CD8-positive, alpha-beta T cell (primary cell): ENCODE measurements at regions of chr5 and their contacts with region 1.

Region 1: DNA sequence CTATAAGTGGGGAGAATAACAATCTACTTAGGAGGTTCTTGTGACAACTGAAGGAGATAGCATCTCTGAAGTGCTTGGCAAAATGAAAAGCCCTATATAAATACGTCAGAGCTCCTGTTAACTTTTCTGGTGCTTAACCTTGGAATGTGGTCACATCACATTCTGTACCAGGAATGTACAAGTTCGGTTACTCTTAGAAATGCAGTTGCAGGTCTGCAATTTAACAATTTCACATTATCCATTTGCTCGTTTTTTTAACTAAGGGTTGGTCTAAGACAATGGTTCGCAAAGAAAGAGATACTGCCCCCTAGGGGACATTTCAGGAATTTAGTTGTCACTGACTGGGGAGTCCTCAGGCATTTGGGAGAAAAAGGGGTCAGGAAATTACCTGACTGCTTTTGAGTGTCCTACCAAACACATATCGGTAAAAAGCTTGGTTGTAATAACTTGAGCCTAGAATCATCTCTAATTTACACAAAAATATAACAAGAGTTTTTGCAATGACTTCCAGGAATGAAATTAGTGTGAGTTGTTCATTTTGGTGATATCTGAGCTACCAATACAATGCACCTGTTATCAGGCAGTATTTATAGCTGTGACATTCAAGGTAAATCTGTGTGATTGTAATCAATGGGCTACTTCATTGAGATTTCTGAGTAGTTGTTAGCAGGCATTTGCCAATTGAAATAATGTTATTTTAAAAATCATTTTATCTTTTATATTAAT is 5.4 kb upstream of the HBEGF start:
- DNase-seq: peak in 8 of 9 experiments; percentile 19 to 83 (median 52)
- ATAC-seq: peak; percentile 84
- H3K4me3 ChIP-seq: no peak overlapping the region
- H3K4me3 Mint-ChIP-seq: no peak overlapping the region
- H3K27ac ChIP-seq: no peak overlapping the region
- H3K27ac Mint-ChIP-seq: no peak overlapping the region
- H3K4me1 ChIP-seq: no peaks in the 10 kb centered on the region
- H3K4me1 Mint-ChIP-seq: peaks cover 10% of the 10 kb centered on the region
- H3K27me3 ChIP-seq: peaks cover 0 to 11% of the 10 kb centered on the region in 2 experiments
- H3K27me3 Mint-ChIP-seq: peaks cover 27% of the 10 kb centered on the region
- CTCF ChIP-seq: peak; percentile 86

Region 2: DNA sequence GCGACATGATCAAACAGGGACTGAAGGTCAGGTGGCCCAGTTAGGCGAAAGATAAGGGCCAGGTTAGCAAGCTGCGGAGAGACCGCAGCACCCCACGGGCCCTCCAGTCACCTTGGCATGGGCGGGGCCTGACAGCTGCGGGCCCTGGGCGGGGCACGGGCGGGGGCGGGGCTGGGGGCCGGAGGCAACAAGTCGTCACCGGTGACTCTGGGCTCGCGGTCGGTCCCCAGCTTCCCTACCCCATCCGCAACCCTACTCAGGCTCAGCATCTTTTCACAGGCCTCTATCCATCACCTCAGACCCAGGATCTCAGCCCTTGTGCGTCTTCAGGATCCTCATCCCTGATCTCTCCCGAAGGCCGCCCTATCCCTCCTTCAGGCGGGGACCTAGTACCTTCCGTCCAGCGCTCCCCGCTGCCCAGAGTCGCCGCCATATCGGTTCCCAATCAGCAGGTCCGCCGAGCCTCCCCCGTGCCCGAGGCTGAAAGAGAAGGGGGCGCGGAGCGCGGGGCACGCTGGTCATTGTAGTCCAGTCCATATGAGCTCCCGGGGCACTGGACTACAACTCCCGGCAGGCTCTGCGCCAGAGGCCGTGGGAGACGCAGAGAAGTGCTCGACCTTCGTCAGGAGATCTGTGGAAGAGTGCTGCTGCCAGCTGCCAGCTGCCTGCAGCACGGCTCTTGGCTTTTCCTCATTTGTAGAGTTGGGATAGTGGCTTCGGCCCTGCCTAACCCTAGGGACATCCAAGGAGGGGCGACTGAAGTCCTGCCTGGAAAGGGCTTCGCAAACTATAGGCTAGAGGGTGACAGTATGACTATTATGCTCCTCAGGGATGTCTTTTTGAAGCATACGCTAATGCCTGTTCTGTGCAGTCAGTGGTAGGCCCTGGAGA is 912.5 kb before region 1 on chr5 and contains the start of gene DNAJC18:
- CTCF ChIA-PET with region 1: no interaction called
- POLR2A ChIA-PET with region 1: no interaction called
- intact Hi-C with region 1: no loop called
- DNase-seq: peak; percentile 78 to 93 (median 90)
- ATAC-seq: peak; percentile 88
- H3K4me3 ChIP-seq: peak within 1 kb of the TSS; percentile 95 to 98
- H3K4me3 Mint-ChIP-seq: peak within 1 kb of the TSS; percentile 98
- H3K27ac ChIP-seq: peak within 1 kb of the TSS; percentile 97 to 98
- H3K27ac Mint-ChIP-seq: peak within 1 kb of the TSS; percentile 99
- H3K4me1 ChIP-seq: peaks cover 24% of the 10 kb centered on the region
- H3K4me1 Mint-ChIP-seq: peaks cover 33% of the 10 kb centered on the region
- H3K27me3 ChIP-seq: no peaks in the 10 kb centered on the region
- H3K27me3 Mint-ChIP-seq: no peaks in the 10 kb centered on the region
- CTCF ChIP-seq: no peak
- total RNA-seq, gene DNAJC18: 8.0 to 10.2 TPM

Region 3: GRCh38 chr5:139856714-139857113 is 495.1 kb before region 1 on chr5:
- CTCF ChIA-PET with region 1: no interaction called
- POLR2A ChIA-PET with region 1: no interaction called
- intact Hi-C with region 1: no loop called
- DNase-seq: no peak
- ATAC-seq: no peak
- H3K4me3 ChIP-seq: no peak overlapping the region
- H3K4me3 Mint-ChIP-seq: no peak overlapping the region
- H3K27ac ChIP-seq: no peak overlapping the region
- H3K27ac Mint-ChIP-seq: no peak overlapping the region
- H3K4me1 ChIP-seq: no peaks in the 10 kb centered on the region
- H3K4me1 Mint-ChIP-seq: no peaks in the 10 kb centered on the region
- H3K27me3 ChIP-seq: no peaks in the 10 kb centered on the region
- H3K27me3 Mint-ChIP-seq: peaks cover 6% of the 10 kb centered on the region
- CTCF ChIP-seq: no peak

Region 4: GRCh38 chr5:140108084-140109017 is 243.4 kb before region 1 on chr5:
- CTCF ChIA-PET with region 1: no interaction called
- POLR2A ChIA-PET with region 1: no interaction called
- intact Hi-C with region 1: no loop called
- DNase-seq: peak in 4 of 9 experiments; percentile 15 to 39 (median 21)
- ATAC-seq: peak; percentile 2
- H3K4me3 ChIP-seq: peak overlapping the region; percentile 63 to 81
- H3K4me3 Mint-ChIP-seq: peak overlapping the region; percentile 96
- H3K27ac ChIP-seq: peak overlapping the region; percentile 96 to 98
- H3K27ac Mint-ChIP-seq: peak overlapping the region; percentile 98
- H3K4me1 ChIP-seq: peaks cover 54% of the 10 kb centered on the region
- H3K4me1 Mint-ChIP-seq: peaks cover 56% of the 10 kb centered on the region
- H3K27me3 ChIP-seq: no peaks in the 10 kb centered on the region
- H3K27me3 Mint-ChIP-seq: peaks cover 17% of the 10 kb centered on the region
- CTCF ChIP-seq: no peak

Region 5: GRCh38 chr5:140244525-140245025 is 107.2 kb before region 1 on chr5:
- CTCF ChIA-PET with region 1: interaction called, 337 read pairs
- POLR2A ChIA-PET with region 1: interaction called, 4 read pairs
- intact Hi-C with region 1: loop called (anchors 1 kb)
- DNase-seq: peak; percentile 43 to 78 (median 75)
- ATAC-seq: peak; percentile 76
- H3K4me3 ChIP-seq: no peak overlapping the region
- H3K4me3 Mint-ChIP-seq: no peak overlapping the region
- H3K27ac ChIP-seq: no peak overlapping the region
- H3K27ac Mint-ChIP-seq: peak overlapping the region; percentile 20
- H3K4me1 ChIP-seq: peaks cover 10% of the 10 kb centered on the region
- H3K4me1 Mint-ChIP-seq: peaks cover 12% of the 10 kb centered on the region
- H3K27me3 ChIP-seq: no peaks in the 10 kb centered on the region
- H3K27me3 Mint-ChIP-seq: no peaks in the 10 kb centered on the region
- CTCF ChIP-seq: peak; percentile 73

Region 6: GRCh38 chr5:140258016-140258415 is 93.8 kb before region 1 on chr5:
- CTCF ChIA-PET with region 1: interaction called, 12 read pairs
- POLR2A ChIA-PET with region 1: no interaction called
- intact Hi-C with region 1: no loop called
- DNase-seq: no peak
- ATAC-seq: no peak
- H3K4me3 ChIP-seq: no peak overlapping the region
- H3K4me3 Mint-ChIP-seq: no peak overlapping the region
- H3K27ac ChIP-seq: no peak overlapping the region
- H3K27ac Mint-ChIP-seq: no peak overlapping the region
- H3K4me1 ChIP-seq: no peaks in the 10 kb centered on the region
- H3K4me1 Mint-ChIP-seq: peaks cover 30% of the 10 kb centered on the region
- H3K27me3 ChIP-seq: no peaks in the 10 kb centered on the region
- H3K27me3 Mint-ChIP-seq: no peaks in the 10 kb centered on the region
- CTCF ChIP-seq: no peak

Region 7: GRCh38 chr5:140336388-140336787 is 15.4 kb before region 1 on chr5:
- CTCF ChIA-PET with region 1: interaction called, 28 read pairs
- POLR2A ChIA-PET with region 1: no interaction called
- intact Hi-C with region 1: no loop called
- DNase-seq: no peak
- ATAC-seq: no peak
- H3K4me3 ChIP-seq: no peak overlapping the region
- H3K4me3 Mint-ChIP-seq: no peak overlapping the region
- H3K27ac ChIP-seq: no peak overlapping the region
- H3K27ac Mint-ChIP-seq: no peak overlapping the region
- H3K4me1 ChIP-seq: no peaks in the 10 kb centered on the region
- H3K4me1 Mint-ChIP-seq: no peaks in the 10 kb centered on the region
- H3K27me3 ChIP-seq: no peaks in the 10 kb centered on the region
- H3K27me3 Mint-ChIP-seq: no peaks in the 10 kb centered on the region
- CTCF ChIP-seq: no peak

Region 8: GRCh38 chr5:140372971-140373487 is 21.3 kb after region 1 on chr5:
- CTCF ChIA-PET with region 1: interaction called, 25 read pairs
- POLR2A ChIA-PET with region 1: no interaction called
- intact Hi-C with region 1: no loop called
- DNase-seq: peak in 7 of 9 experiments; percentile 9 to 64 (median 44)
- ATAC-seq: peak; percentile 81
- H3K4me3 ChIP-seq: no peak overlapping the region
- H3K4me3 Mint-ChIP-seq: no peak overlapping the region
- H3K27ac ChIP-seq: no peak overlapping the region
- H3K27ac Mint-ChIP-seq: no peak overlapping the region
- H3K4me1 ChIP-seq: no peaks in the 10 kb centered on the region
- H3K4me1 Mint-ChIP-seq: peaks cover 2% of the 10 kb centered on the region
- H3K27me3 ChIP-seq: no peaks in the 10 kb centered on the region
- H3K27me3 Mint-ChIP-seq: no peaks in the 10 kb centered on the region
- CTCF ChIP-seq: peak; percentile 75

Region 9: GRCh38 chr5:141439411-141440141 is 1087.8 kb after region 1 on chr5:
- CTCF ChIA-PET with region 1: no interaction called
- POLR2A ChIA-PET with region 1: no interaction called
- intact Hi-C with region 1: no loop called
- DNase-seq: no peak
- ATAC-seq: no peak
- H3K4me3 ChIP-seq: no peak overlapping the region
- H3K4me3 Mint-ChIP-seq: no peak overlapping the region
- H3K27ac ChIP-seq: no peak overlapping the region
- H3K27ac Mint-ChIP-seq: no peak overlapping the region
- H3K4me1 ChIP-seq: no peaks in the 10 kb centered on the region
- H3K4me1 Mint-ChIP-seq: no peaks in the 10 kb centered on the region
- H3K27me3 ChIP-seq: no peaks in the 10 kb centered on the region
- H3K27me3 Mint-ChIP-seq: peaks cover 30% of the 10 kb centered on the region
- CTCF ChIP-seq: no peak